Left cardiac atrium (tissue), 4 donors: ENCODE measurements at regions of chr11 and their contacts with region 1.

Region 1: DNA sequence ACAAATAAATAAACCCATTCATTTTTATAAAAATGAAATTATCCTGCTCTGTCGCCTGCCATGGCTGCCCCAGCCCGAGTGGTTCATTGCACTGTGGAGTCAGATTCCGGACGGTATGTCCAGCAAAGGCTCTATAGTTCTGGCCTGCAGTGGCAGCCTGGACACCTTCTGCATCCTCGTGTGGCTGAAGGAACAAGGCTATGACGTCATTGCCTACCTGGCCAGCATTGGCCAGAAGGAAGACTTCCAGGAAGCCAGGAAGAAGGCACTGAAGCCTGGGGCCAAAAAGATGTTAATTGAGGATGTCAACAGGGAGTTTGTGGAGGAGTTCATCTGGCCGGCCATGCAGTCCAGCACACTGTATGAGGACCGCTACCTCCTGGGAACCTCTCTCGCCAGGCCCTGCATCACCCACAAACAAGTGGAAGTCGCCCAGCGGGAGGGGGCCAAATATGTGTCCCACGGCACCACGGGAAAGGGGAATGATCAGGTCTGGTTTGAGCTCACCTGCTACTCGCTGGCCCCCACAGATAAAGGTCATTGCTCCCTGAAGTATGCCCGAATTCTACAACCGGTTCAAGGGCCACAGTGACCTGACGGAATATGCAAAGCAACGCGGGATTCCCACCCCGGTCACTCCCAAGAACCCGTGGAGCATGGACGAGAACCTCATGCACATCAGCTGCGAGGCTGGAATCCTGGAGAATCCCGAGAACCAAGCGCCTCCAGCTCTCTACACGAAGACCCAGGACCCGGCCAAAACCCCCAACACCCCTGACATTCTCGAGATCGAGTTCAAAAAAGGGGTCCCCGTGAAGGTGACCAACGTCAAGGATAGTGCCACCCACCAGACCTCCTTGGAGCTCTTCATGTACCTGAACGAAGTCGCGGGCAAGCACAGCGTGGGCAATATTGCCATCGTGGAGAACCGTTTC is 158.2 kb upstream of the GUCY1A2 start:
- DNase-seq: no peak
- ATAC-seq: no peak

Region 2: DNA sequence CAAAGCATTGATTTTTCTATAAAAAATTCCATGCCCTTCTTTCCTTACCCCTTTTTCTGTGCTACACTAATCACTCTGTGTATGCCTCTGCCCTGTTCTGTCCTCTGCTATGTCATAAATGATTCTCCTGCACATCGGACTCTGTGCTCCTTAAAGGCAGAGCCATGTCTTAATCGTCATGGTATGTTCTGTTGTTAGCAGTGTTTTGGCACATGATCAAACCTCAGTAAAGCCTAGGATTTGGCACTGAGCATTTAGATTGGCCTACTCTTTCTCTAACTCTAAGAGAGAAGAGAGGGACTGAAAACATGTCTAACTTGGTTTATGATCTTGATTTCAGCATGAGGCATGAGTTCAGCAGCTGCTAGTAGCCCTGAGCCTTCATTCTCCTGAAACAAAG is 832.0 kb before region 1 on chr11:
- intact Hi-C with region 1: loop called in 1 of 2 experiments (anchors 10 kb)
- DNase-seq: no peak
- ATAC-seq: no peak

Region 3: DNA sequence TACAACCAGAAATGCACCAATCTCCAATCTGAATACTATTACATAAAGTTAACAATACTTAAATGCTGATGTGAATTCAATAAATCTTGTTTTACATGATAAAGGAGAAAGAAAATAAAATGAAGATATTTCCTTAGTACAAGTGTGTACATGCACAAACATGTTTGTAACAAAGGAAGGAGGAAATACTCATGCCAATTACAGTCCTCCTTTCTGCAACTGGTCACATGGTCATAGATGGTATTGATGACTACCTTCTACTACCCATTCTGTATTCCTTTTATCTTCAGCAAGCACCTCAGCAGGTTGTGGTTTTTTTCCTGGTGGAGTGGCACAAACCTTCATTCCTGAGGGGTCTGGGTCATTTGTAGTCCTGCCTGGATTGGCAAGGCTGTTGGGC is 56.0 kb after region 1 on chr11:
- intact Hi-C with region 1: no loop called
- DNase-seq: no peak
- ATAC-seq: no peak

Region 4: DNA sequence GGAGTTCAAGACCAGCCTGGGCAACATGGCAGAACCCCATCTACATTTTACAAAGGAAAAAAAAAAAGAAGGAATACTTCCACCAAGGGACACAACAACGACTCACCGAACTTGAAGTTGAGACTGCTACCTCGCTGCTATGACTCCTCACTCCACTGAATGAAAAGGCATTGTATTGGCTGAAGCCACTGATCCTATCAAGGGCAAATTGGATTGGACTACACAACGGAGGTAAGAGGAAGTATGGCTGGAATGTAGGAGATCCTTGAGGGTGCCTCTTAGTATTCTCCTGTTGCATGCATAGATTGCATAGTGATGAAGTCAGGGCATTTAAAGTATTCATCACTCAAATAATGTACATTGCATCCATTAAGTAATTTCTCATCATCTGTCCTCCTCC is 183.3 kb after region 1 on chr11:
- intact Hi-C with region 1: no loop called
- DNase-seq: no peak
- ATAC-seq: no peak

Region 5: GRCh38 chr11:107468596-107468995 is 292.2 kb after region 1 on chr11:
- intact Hi-C with region 1: no loop called
- DNase-seq: no peak
- ATAC-seq: no peak

Region 6: DNA sequence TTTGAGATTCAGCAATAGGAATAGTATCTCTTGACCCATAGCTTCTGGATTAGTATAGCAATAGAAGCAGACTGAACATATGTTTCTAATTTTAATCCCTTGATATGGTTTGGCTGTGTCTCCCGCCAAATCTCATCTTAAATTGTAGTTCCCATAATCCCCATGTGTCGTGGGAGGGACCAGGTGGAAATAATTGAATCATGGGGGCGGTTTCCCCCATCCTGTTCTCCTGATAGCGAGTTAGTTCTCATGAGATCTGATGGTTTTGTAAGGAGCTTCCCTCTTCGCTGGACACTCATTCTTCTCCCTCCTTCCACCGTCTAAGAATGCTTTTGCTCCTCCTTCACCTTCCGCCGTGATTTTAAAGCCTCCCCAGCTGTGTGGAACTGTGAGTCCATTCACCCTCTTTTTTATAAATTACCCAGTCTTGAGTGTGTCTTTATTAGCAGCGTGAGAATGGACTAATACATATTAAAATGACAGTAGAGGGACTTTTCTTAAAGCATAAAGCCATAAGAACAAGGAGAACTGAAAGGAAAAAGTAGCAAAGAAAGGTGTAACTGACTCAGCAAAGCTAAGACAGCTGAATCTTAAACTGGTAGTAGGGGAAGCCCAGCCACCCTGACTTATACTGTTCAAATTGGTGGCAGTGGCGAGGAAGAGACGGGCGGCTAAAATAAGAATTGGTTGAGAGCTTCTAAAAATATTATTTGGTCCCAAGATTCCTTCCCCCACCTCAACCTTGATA is 555.7 kb after region 1 on chr11:
- intact Hi-C with region 1: no loop called
- DNase-seq: no peak
- ATAC-seq: no peak